ENCODE measurements at regions of chr15 and their contacts with region 1.

Region 1: DNA sequence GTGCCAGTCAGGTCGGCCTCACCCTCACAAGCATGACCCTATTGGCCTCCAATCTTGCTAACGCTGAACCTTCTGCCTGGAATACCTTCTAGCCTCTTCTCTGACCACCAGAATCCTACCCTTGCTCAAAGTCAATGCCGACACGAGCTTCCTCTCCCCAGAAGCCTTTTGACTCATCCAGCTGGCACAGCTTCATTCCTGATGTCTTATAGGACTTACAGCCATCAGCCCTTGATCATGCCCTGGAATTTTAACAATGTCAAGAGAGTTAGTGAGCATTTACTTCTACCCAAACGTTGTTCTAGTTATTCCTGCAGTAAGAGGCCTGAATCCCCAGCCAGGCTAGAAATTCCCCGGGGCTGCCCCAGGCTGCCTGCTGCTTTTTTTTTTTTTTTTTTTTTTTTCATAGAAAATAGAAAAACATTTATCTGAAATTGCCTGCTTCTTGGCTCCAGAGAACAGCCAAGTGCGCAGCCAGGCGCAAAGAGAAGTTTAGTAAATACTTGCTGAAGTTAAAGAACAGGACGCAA is 3.9 kb downstream of the CYP1A2 start:
- DNase-seq: no peak
- H3K4me3 ChIP-seq: no peak overlapping the region
- H3K27ac ChIP-seq: no peak overlapping the region
- H3K4me1 ChIP-seq: no peaks in the 10 kb centered on the region
- H3K27me3 ChIP-seq: no peaks in the 10 kb centered on the region
- CTCF ChIP-seq: no peak
- POLR2A ChIP-seq: no peak

Region 2: DNA sequence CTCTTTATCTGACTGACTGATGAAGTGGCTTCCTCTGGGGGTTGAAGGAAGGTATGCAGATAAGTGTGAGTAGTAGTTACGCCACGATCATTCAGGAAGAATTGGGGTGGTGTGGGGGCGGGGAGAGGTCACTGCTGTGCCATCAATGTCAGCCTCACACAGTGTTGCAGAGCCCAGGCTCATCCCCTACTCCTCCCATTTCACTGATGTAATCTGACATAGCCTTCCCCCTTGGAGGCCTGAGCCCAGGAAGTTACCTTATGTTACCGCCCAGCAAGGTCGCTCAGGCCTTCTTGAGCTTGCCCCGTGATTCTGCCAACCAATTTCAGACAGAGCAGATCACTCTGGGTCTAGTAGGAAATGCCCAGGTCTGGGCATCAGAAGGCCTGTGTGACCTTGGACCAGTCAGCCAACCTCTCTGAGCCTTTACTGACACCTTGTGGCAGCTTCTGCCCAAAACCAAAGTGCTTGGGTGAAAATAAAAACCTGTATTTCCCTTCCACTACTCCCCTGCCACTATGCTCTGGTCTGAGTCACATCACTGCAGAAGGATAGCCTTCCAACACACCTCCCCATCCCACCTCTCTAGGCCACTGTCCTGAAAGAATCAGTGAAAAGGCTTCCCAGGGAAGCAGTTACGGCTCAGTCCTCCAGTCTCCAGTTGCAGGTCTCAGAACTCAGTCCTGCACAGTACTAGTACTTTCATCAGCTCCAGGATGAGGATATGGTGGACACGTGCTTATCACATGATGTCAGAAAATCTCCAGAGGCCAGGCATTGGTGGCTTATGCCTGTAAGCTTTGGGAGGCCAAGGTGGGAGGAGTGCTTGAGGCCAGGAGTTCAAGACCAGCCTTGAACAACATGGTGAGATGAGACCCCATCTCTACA is 971.3 kb before region 1 on chr15:
- intact Hi-C with region 1: no loop called
- DNase-seq: no peak
- H3K4me3 ChIP-seq: no peak overlapping the region
- H3K27ac ChIP-seq: no peak overlapping the region
- H3K4me1 ChIP-seq: no peaks in the 10 kb centered on the region
- H3K27me3 ChIP-seq: no peaks in the 10 kb centered on the region
- CTCF ChIP-seq: no peak
- POLR2A ChIP-seq: no peak

Region 3: GRCh38 chr15:74788683-74789631 is 36.4 kb after region 1 on chr15:
- intact Hi-C with region 1: loop called (anchors 1 kb)
- DNase-seq: no peak
- H3K4me3 ChIP-seq: peak overlapping the region in 1 of 3 donors; percentile 25
- H3K27ac ChIP-seq: peak overlapping the region; percentile 60 to 84
- H3K4me1 ChIP-seq: peaks cover 23 to 34% of the 10 kb centered on the region in 2 donors
- H3K27me3 ChIP-seq: no peaks in the 10 kb centered on the region
- CTCF ChIP-seq: no peak
- POLR2A ChIP-seq: no peak

Region 4: GRCh38 chr15:74866090-74866489 is 113.5 kb after region 1 on chr15:
- intact Hi-C with region 1: no loop called
- DNase-seq: no peak
- H3K4me3 ChIP-seq: no peak overlapping the region
- H3K27ac ChIP-seq: peak overlapping the region in 1 of 2 donors; percentile 50
- H3K4me1 ChIP-seq: peaks cover 0 to 26% of the 10 kb centered on the region in 2 donors
- H3K27me3 ChIP-seq: no peaks in the 10 kb centered on the region
- CTCF ChIP-seq: no peak
- POLR2A ChIP-seq: no peak

Region 5: DNA sequence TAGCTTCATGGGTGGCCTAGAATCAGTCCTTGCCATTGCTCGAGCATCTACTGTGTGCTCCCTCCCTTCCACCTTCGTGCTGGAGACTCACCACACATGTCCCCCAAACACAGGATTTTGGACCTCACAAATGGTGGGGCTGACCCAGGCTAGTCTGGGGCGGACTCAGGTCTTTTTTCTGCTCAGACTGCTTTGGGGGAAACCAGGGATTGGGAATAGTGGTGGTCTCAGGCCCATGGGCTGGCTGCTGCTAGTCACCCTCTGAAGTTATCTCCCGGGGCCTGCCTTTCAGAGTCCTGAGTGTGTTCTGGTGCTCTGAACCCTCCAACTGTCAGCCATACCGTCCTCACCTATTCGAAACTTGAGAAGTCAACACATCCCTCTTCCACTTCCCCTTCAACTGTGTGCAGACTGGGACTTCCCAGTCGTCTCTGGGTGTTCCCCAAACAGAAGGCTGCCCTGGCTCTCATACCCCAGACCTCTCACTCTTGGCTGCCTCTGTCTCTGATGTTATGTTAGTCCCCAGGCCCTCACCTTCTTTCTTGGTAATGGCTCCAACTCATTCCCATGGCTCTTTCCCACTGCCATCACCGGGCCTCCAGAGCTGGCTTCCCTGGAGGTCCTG is 316.9 kb after region 1 on chr15:
- intact Hi-C with region 1: no loop called
- DNase-seq: no peak
- H3K4me3 ChIP-seq: no peak overlapping the region
- H3K27ac ChIP-seq: no peak overlapping the region
- H3K4me1 ChIP-seq: no peaks in the 10 kb centered on the region
- H3K27me3 ChIP-seq: no peaks in the 10 kb centered on the region
- CTCF ChIP-seq: no peak
- POLR2A ChIP-seq: no peak

Measured in breast epithelium (tissue), 4 donors.